ENCODE measurements at regions of chr2 and their contacts with region 1.

Region 1: GRCh38 chr2:121095257-121096080 is 189.5 kb downstream of the TFCP2L1 start:
- DNase-seq: peak; percentile 55 to 75
- ATAC-seq: peak; percentile 57 to 80 (median 74)
- H3K4me3 ChIP-seq: no peak overlapping the region
- H3K27ac ChIP-seq: no peak overlapping the region
- H3K4me1 ChIP-seq: no peaks in the 10 kb centered on the region
- H3K27me3 ChIP-seq: no peaks in the 10 kb centered on the region
- CTCF ChIP-seq: peak; percentile 45

Region 2: DNA sequence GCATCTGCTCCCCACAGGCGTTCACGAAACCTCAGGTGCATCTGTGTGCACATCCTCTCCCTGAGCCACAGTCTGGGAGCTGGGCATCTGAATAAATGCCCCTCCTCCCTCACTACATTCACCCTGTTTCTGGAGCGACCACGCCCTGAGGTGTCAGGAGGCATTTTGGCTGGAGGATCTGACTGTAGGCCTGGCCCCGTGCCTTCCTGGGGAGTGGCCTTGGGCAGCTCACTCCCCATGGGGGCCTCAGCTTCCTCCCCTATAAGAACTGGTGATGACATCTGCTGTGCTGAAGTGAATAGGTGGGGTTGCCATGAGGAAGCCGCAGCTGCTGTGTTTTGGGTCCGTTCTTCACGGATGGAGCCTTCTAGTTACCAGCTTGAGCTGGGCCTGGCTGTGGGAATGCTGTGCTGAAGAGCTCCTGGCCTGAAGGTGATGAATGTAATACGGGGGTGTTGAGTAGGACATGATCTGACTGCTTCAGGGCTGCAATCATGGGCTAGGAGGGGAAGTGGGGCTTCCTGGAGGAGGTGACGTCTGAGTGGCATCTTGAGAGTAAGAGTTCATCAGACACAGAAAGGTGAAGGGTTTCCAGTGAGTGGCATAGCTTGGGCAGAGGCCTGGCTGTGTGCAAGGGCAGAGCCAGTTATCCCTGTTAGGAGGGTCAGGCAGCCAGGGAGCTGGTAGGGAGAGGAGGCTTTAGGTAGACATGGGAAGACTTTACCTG is 301.6 kb before region 1 on chr2:
- intact Hi-C with region 1: no loop called
- DNase-seq: peak in 1 of 2 donors; percentile 49
- ATAC-seq: peak in 1 of 4 donors; percentile 32
- H3K4me3 ChIP-seq: no peak overlapping the region
- H3K27ac ChIP-seq: no peak overlapping the region
- H3K4me1 ChIP-seq: peaks cover 4% of the 10 kb centered on the region
- H3K27me3 ChIP-seq: peaks cover 0 to under 1% (median 0%) of the 10 kb centered on the region in 3 donors
- CTCF ChIP-seq: no peak

Region 3: GRCh38 chr2:121071034-121071504 is 24.4 kb before region 1 on chr2:
- intact Hi-C with region 1: no loop called
- DNase-seq: peak; percentile 63 to 84
- ATAC-seq: peak; percentile 63 to 83 (median 67)
- H3K4me3 ChIP-seq: no peak overlapping the region
- H3K27ac ChIP-seq: no peak overlapping the region
- H3K4me1 ChIP-seq: no peaks in the 10 kb centered on the region
- H3K27me3 ChIP-seq: peaks cover 0 to 11% (median 8%) of the 10 kb centered on the region in 3 donors
- CTCF ChIP-seq: peak; percentile 97

Region 4: GRCh38 chr2:121297217-121297830 is 201.9 kb after region 1 on chr2:
- intact Hi-C with region 1: loop called in 1 of 2 experiments (anchors 5 kb)
- DNase-seq: no peak
- ATAC-seq: peak in 3 of 4 donors; percentile 68 to 80 (median 72)
- H3K4me3 ChIP-seq: no peak overlapping the region
- H3K27ac ChIP-seq: no peak overlapping the region
- H3K4me1 ChIP-seq: no peaks in the 10 kb centered on the region
- H3K27me3 ChIP-seq: peaks cover 0 to 4% (median 0%) of the 10 kb centered on the region in 3 donors
- CTCF ChIP-seq: peak; percentile 43